K562 (cell line): ENCODE measurements at regions of chr2 and their contacts with region 1.

Region 1: DNA sequence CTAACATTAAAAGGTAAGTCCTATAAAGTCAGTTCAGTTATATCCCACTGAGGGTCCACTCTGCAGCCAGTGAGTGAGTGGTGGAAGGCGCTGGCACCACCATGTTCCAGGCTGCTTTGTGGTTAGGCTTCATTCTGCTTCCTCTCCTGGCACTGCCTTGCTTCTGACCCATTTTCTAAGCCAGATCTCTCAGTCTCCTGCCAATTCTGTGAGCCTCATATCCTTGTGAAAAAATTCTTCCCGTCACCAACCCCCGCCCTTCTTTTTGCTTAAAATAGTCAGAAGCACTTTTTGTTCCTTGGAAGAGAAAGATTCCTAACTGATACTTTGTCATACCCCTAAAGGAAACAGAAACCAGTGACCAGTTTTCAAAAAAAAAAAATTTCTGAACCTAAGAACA is 139.8 kb upstream of the NCK2 start:
- DNase-seq: no peak
- ATAC-seq: no peak
- H3K4me3 ChIP-seq: no peak overlapping the region
- H3K27ac ChIP-seq: no peak overlapping the region
- H3K4me1 ChIP-seq: peaks cover 16 to 20% of the 10 kb centered on the region in 2 experiments
- H3K27me3 ChIP-seq: no peaks in the 10 kb centered on the region
- CTCF ChIP-seq: no peak
- EP300 ChIP-seq: no peak
- POLR2A ChIP-seq: no peak
- RAD21 ChIP-seq: no peak

Region 2: GRCh38 chr2:104919127-104919526 is 685.8 kb before region 1 on chr2:
- CTCF ChIA-PET with region 1: no interaction called
- POLR2A ChIA-PET with region 1: no interaction called
- in situ Hi-C with region 1: no loop called
- intact Hi-C with region 1: no loop called
- DNase-seq: no peak
- ATAC-seq: no peak
- H3K4me3 ChIP-seq: no peak overlapping the region
- H3K27ac ChIP-seq: no peak overlapping the region
- H3K4me1 ChIP-seq: no peaks in the 10 kb centered on the region
- H3K27me3 ChIP-seq: no peaks in the 10 kb centered on the region
- CTCF ChIP-seq: no peak
- EP300 ChIP-seq: no peak
- POLR2A ChIP-seq: no peak
- RAD21 ChIP-seq: no peak

Region 3: GRCh38 chr2:105582952-105583660 is 21.8 kb before region 1 on chr2:
- CTCF ChIA-PET with region 1: no interaction called
- POLR2A ChIA-PET with region 1: interaction called, 12 read pairs
- in situ Hi-C with region 1: no loop called
- intact Hi-C with region 1: no loop called
- DNase-seq: no peak
- ATAC-seq: no peak
- H3K4me3 ChIP-seq: no peak overlapping the region
- H3K27ac ChIP-seq: no peak overlapping the region
- H3K4me1 ChIP-seq: no peaks in the 10 kb centered on the region; a peak in 1 of 5 replicates
- H3K27me3 ChIP-seq: no peaks in the 10 kb centered on the region; a peak in 1 of 5 replicates
- CTCF ChIP-seq: no peak
- EP300 ChIP-seq: no peak
- POLR2A ChIP-seq: no peak
- RAD21 ChIP-seq: no peak

Region 4: GRCh38 chr2:105674859-105675541 is 70.1 kb after region 1 on chr2:
- CTCF ChIA-PET with region 1: no interaction called
- POLR2A ChIA-PET with region 1: interaction called, 4 read pairs
- in situ Hi-C with region 1: no loop called
- intact Hi-C with region 1: loop called (anchors 5 kb)
- DNase-seq: no peak
- ATAC-seq: no peak; the same call in 2 of the 3 replicates
- H3K4me3 ChIP-seq: no peak overlapping the region
- H3K27ac ChIP-seq: no peak overlapping the region
- H3K4me1 ChIP-seq: peaks cover 1 to 5% of the 10 kb centered on the region in 2 experiments; a peak in 4 of 5 replicates
- H3K27me3 ChIP-seq: no peaks in the 10 kb centered on the region; a peak in 1 of 5 replicates
- CTCF ChIP-seq: no peak
- EP300 ChIP-seq: no peak
- POLR2A ChIP-seq: no peak
- RAD21 ChIP-seq: no peak

Region 5: DNA sequence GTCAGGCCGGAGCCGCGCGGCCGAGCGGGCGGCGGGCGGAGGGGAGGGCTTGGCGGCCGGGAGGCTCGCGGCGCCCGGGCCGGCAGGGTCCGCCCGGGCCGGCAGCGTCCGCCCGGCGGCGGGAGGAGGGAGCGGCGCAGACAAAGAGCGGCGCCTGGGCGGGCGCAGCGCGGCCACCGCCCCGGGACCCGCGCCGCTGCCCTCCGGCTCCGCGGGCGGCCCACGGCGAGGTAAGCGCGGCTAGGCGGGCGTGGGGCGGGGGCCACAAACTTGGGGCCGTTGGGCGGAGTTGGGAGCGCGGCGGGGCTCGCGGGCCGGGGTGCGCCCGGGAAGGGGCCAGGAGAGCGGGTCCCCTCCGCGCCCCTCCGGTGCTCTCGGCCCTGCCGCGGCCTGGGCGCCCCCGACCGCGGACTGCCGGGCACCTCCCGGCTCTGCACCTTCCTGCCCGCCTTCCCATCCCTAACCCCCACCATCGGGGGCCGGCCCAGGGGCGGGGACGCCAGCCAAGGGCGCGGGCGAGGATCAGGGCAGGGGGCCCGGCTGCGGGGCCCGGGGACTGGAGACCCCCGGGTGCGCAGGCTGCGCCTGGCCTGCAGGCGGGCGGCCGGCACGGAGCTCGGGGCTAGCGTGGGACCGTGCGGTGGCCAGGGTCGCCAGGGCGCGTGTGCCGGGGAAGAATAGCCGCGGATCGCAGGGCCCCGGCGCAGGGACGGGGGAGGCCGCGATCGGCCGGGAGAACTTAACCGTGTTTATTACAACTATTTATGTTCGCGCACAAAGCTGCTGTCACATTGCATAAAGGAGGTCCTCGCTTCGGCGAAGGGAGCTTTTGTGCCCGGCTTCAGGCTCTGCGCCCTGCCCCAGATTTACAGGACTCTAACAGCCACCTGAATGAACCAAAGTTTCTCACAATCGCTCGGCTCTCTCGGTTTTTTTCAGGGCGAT is 140.2 kb after region 1 on chr2 and contains the start of gene NCK2:
- CTCF ChIA-PET with region 1: no interaction called
- POLR2A ChIA-PET with region 1: interaction called, 15 read pairs
- in situ Hi-C with region 1: no loop called
- intact Hi-C with region 1: no loop called
- DNase-seq: peak; percentile 24 to 66 (median 48)
- ATAC-seq: peak; percentile 64
- H3K4me3 ChIP-seq: peak within 1 kb of the TSS; percentile 74
- H3K27ac ChIP-seq: peak within 1 kb of the TSS; percentile 68; the same call in 1 of the 3 replicates
- H3K4me1 ChIP-seq: peaks cover 12 to 13% of the 10 kb centered on the region in 2 experiments
- H3K27me3 ChIP-seq: no peaks in the 10 kb centered on the region
- CTCF ChIP-seq: no peak
- EP300 ChIP-seq: no peak
- POLR2A ChIP-seq: no peak
- RAD21 ChIP-seq: no peak
- polyA plus RNA-seq, gene NCK2: 0.90 to 1.8 TPM